IMR-90 (cell line): ENCODE measurements at regions of chr9 and their contacts with region 1.

Region 1: GRCh38 chr9:101114317-101114716 is 85.8 kb downstream of the PLPPR1 start:
- DNase-seq: no peak
- ATAC-seq: no peak
- H3K4me3 ChIP-seq: no peak overlapping the region
- H3K27ac ChIP-seq: no peak overlapping the region
- H3K4me1 ChIP-seq: no peaks in the 10 kb centered on the region
- H3K27me3 ChIP-seq: no peaks in the 10 kb centered on the region
- CTCF ChIP-seq: no peak
- POLR2A ChIP-seq: no peak
- RAD21 ChIP-seq: no peak

Region 2: GRCh38 chr9:101098392-101098791 is 15.9 kb before region 1 on chr9:
- CTCF ChIA-PET with region 1: no interaction called
- POLR2A ChIA-PET with region 1: interaction called, 10 read pairs
- dilution Hi-C with region 1: no loop called
- in situ Hi-C with region 1: no loop called
- intact Hi-C with region 1: no loop called
- DNase-seq: no peak
- ATAC-seq: no peak
- H3K4me3 ChIP-seq: no peak overlapping the region
- H3K27ac ChIP-seq: no peak overlapping the region
- H3K4me1 ChIP-seq: no peaks in the 10 kb centered on the region
- H3K27me3 ChIP-seq: no peaks in the 10 kb centered on the region
- CTCF ChIP-seq: no peak
- POLR2A ChIP-seq: no peak
- RAD21 ChIP-seq: no peak